ENCODE measurements at regions of chr1 and their contacts with region 1.

Region 1: GRCh38 chr1:220294846-220295301 is 22.6 kb upstream of the RAB3GAP2 start:
- DNase-seq: no peak
- H3K4me3 ChIP-seq: no peak overlapping the region
- H3K27ac ChIP-seq: no peak overlapping the region
- H3K4me1 ChIP-seq: no peaks in the 10 kb centered on the region
- H3K27me3 ChIP-seq: peaks cover 0 to 7% (median 0%) of the 10 kb centered on the region in 3 donors
- CTCF ChIP-seq: no peak
- EP300 ChIP-seq: no peak
- POLR2A ChIP-seq: no peak

Region 2: DNA sequence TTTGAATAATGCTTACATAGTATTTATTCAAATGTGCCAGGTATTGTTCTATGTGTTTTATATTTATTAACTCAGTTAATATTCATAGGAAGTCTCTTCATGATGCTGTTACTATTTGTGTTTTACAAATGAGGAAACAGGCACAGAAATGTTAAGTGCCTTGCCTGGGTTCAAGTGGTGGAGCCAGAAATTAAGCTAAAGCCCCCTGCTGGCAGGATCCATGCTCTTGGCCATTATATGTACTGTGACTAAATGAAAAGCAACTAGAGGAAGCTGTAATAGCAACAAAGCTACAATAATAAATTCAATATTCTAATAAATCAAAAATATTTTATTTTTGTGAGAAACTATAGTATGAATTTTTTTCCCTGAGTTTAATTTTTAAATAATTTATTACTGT is 171.0 kb before region 1 on chr1:
- intact Hi-C with region 1: no loop called
- DNase-seq: peak in 1 of 2 donors; percentile 20
- H3K4me3 ChIP-seq: no peak overlapping the region
- H3K27ac ChIP-seq: no peak overlapping the region
- H3K4me1 ChIP-seq: peaks cover 0 to 18% (median 9%) of the 10 kb centered on the region in 4 donors
- H3K27me3 ChIP-seq: no peaks in the 10 kb centered on the region
- CTCF ChIP-seq: peak in 2 of 7 experiments; percentile 18 to 23
- EP300 ChIP-seq: no peak
- POLR2A ChIP-seq: no peak

Region 3: GRCh38 chr1:220398238-220398637 is 103.4 kb after region 1 on chr1:
- intact Hi-C with region 1: no loop called
- DNase-seq: no peak
- H3K4me3 ChIP-seq: no peak overlapping the region
- H3K27ac ChIP-seq: no peak overlapping the region
- H3K4me1 ChIP-seq: no peaks in the 10 kb centered on the region
- H3K27me3 ChIP-seq: no peaks in the 10 kb centered on the region
- CTCF ChIP-seq: no peak
- EP300 ChIP-seq: no peak
- POLR2A ChIP-seq: no peak

Region 4: GRCh38 chr1:220784751-220785150 is 489.9 kb after region 1 on chr1:
- intact Hi-C with region 1: loop called (anchors 5 kb)
- DNase-seq: no peak
- H3K4me3 ChIP-seq: no peak overlapping the region
- H3K27ac ChIP-seq: no peak overlapping the region
- H3K4me1 ChIP-seq: peaks cover 0 to 33% (median 26%) of the 10 kb centered on the region in 4 donors
- H3K27me3 ChIP-seq: peaks cover 0 to 10% (median 0%) of the 10 kb centered on the region in 3 donors
- CTCF ChIP-seq: no peak
- EP300 ChIP-seq: no peak
- POLR2A ChIP-seq: no peak